Activated B cell treated with CpG ODN at 0.5 μM for 24 hours (primary cell): ENCODE measurements at regions of chr9 and their contacts with region 1.

Region 1: DNA sequence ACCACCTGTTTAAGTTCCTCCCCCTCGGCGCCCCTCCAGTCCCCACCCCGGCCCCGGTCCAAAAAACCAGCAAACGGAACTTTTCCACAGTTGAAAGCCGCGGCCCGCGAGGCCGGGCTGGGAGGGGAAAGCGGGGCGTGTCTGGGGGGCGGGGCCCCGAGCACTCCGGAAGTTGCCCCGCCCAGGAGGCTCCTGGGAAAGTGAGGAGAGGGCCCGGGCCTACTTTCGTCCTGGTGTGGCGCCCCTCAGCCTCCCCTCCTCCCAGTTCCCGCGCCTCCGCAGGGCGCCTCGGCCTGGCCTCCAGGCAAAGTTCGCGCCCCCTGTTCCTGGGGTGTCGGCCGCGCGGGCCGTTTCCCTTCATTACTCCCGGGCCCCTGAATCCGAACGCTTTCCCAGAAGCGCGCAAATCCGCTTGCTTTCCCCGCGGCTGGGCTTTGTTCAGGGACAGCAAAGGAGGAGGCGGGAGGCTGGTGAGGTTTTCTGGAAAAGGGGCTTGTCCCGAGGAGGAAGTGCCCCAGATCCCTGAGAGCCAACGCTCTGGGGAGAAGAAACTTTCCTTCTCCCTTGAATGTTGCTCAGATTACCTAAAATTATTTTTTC is 4.5 kb upstream of the DMRT3 start:
- DNase-seq: no peak
- ATAC-seq: no peak
- H3K4me3 Mint-ChIP-seq: no peak overlapping the region
- H3K27ac Mint-ChIP-seq: no peak overlapping the region
- H3K4me1 Mint-ChIP-seq: peaks cover 10% of the 10 kb centered on the region
- H3K27me3 Mint-ChIP-seq: peaks cover 58% of the 10 kb centered on the region
- CTCF ChIP-seq: no peak

Region 2: DNA sequence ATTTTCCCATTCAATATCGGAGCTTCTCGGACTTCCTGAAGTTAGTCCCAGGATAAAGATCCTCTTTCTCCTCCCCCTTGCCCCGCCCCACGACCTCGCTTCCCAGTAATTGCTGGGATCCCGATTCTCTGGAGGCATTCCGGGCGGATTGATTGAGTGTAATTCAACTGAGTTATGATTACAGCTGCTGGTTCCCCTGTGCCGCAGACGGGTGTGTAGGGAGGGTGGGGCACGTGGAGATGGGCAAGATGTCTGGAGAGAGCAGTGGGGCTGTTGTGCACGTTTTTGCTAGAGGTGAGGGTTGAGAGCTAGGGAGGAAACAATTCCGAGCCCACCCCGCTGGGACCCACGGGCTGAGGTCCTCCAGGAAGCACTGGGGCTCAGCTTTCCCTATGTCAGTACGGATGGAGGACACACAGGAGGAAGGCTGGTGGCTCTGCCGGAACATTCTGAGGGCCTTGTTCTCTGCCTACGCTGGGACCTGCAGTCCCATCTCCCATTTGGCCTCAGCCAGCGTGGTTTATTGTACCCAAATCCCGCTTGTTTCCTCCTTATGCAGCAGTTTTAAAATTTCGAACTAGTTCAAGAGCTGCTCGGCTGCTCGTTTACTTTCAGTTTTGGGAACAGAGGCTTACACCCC is 75.7 kb after region 1 on chr9:
- CTCF ChIA-PET with region 1: no interaction called
- POLR2A ChIA-PET with region 1: no interaction called
- intact Hi-C with region 1: loop called (anchors 2 kb)
- DNase-seq: no peak
- ATAC-seq: no peak
- H3K4me3 Mint-ChIP-seq: peak overlapping the region; percentile 80
- H3K27ac Mint-ChIP-seq: peak overlapping the region; percentile 54
- H3K4me1 Mint-ChIP-seq: peaks cover 43% of the 10 kb centered on the region
- H3K27me3 Mint-ChIP-seq: peaks cover 79% of the 10 kb centered on the region
- CTCF ChIP-seq: no peak